ENCODE measurements at regions of chr15 and their contacts with region 1.

Region 1: GRCh38 chr15:73697033-73697467 is 12.9 kb downstream of the CD276 start:
- DNase-seq: peak in 1 of 2 experiments; percentile 40
- H3K4me3 ChIP-seq: no peak overlapping the region
- H3K4me1 ChIP-seq: no peaks in the 10 kb centered on the region
- H3K27me3 ChIP-seq: no peaks in the 10 kb centered on the region

Region 2: DNA sequence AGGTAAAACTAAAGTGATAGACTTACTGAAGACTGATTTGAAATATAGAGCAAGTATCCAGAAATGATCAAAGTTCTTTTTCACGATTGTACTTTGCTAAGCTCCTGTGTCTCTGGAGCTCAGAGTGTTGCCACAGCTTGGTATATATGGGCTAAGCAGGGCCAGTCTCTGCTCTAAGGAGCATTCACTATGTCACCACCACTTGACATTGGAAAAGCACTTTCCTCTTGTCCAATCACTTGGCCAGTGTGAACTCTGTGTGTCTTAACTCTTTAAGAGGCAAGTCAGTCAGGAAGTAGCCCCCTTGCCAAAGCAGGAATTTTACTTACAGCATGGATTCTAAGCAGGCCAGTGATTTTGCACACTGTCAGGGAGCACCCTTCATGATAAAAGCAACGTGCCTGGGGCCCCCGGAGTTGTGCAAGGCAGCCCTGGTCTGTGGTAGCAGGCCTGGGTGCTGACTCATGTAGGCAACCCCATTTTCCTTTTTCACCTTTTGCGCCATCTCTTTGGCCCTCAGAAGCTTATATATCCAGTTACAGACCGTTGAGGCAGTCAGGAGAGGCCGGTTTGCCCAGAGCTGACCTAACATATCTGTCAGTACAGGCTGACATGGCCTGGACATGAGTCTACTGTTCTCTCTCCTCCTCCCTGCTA is 401.3 kb before region 1 on chr15:
- in situ Hi-C with region 1: loop called (anchors 5 kb)
- DNase-seq: no peak
- H3K4me3 ChIP-seq: no peak overlapping the region
- H3K4me1 ChIP-seq: no peaks in the 10 kb centered on the region
- H3K27me3 ChIP-seq: no peaks in the 10 kb centered on the region

Region 3: GRCh38 chr15:73560501-73561117 is 136.4 kb before region 1 on chr15:
- in situ Hi-C with region 1: loop called (anchors 25 kb)
- DNase-seq: peak; percentile 51 to 86
- H3K4me3 ChIP-seq: no peak overlapping the region
- H3K4me1 ChIP-seq: no peaks in the 10 kb centered on the region; the same call in 1 of the 2 replicates
- H3K27me3 ChIP-seq: no peaks in the 10 kb centered on the region

Region 4: DNA sequence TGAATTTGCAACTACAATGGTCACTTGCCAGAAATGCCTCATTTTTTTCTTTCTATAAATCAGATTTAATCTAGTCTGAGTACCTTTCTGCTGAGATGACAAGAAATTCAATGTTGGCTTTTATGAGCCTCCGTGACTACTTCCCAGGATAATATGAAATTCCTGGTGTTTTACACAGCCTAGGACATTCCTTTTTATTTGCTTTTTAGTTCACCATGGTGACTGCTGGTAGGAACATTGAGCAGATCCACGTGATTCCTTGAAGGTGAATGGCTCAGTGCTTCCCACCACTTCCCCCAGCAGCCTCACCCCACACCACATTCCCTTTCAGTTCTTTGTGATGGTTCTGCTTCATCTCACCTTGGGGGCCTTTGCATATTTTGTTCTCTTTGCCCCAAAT is 59.5 kb before region 1 on chr15:
- in situ Hi-C with region 1: loop called (anchors 5 kb)
- DNase-seq: no peak
- H3K4me3 ChIP-seq: no peak overlapping the region
- H3K4me1 ChIP-seq: peaks cover 13% of the 10 kb centered on the region
- H3K27me3 ChIP-seq: peaks cover 31% of the 10 kb centered on the region

Measured in HAP-1 (cell line).